Posterior vena cava (tissue), 2 donors: ENCODE measurements at regions of chr7 and their contacts with region 1.

Region 1: GRCh38 chr7:96548664-96549063 is 161.0 kb downstream of the SEM1 start:
- DNase-seq: no peak

Region 2: GRCh38 chr7:95916573-95917297 is 631.9 kb before region 1 on chr7:
- intact Hi-C with region 1: no loop called
- DNase-seq: peak; percentile 93

Region 3: DNA sequence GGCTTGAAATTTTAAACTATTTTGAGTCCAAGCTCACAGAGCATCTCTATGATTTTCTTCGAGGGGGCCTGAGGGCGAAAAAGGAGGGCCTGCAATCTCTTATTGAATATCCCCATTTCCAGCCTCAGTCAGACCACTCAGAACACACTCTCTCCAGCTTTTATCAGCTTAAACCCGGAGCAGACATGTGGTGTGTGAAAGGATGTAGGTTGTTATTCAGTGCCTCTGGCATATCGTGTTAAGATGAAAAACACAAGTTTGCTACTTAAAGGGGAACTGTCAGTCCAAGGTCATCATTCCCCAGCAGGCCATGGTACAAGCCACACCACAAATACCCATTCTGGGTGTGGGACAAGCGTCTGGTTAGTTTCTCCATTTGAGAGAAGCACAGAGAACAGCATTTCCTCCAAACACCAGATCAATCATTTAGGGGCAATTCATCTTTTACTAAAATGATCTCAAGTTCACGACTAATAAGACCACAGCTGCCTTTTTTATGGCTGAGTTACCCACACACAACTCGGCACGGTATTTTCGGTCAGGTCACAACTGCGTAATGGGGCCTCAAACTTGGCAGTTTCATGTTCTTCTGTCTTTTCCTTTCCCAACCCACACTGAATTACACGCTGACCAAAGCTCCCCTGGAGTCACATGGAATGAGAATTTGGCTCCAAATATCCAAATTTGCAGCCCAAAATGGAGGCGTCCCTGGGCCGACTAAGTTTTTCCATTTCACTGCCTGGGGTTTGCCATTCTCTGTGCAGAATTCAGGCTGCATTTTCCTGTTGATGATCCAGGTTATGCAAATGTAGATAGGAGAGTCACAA is 27.4 kb before region 1 on chr7:
- intact Hi-C with region 1: loop called in 1 of 2 experiments (anchors 2 kb)
- DNase-seq: no peak

Region 4: DNA sequence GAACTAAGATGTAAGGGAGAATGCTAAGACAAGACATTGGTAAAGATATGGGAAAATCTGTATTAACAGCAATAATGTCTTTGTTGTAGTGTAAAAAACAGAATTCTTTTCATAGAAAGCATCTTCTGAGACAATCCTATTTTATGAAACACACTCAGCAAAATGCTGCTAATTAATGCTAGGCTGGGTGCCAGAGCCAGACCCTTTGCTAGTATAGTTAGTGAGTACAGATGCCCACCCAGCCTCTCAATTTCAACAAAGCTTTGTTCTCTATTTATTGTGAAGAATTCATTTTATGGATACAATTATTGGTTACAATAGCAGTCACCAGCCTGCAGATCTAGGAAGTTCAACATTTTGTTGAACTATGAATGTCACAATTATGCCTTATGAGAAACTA is 29.9 kb after region 1 on chr7:
- intact Hi-C with region 1: no loop called
- DNase-seq: no peak